H1 (cell line): ENCODE measurements at regions of chr17 and their contacts with region 1.

Region 1: DNA sequence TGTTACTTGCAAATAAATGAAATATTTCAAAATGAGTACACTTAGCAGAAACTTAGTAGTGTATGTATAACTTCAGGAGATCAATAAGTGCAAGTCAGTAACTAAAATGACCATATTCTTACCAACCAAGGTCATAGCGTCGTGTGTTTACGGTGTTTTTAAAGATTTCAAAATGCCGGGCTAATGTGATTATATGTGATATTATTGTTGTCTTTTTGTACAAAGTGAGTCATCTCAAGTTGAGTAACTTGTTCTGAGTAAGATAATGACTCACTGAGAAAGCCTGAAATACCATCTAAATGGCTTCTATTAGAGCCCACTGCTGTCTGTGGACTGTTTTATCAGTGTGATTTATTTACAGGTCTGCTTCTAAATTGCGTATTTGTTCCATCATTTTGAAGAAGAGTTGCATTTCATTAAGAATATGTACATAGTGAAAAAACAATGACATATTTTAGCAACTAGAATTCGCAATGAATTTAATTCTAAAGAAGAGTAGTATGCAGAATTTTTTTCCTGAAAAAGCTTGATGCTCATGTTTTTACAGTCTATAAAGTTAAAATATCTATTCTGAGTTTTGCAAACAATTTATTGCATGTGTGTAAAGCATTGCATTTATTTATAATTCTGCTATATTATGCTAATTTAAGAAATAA is 12.7 kb downstream of the KRT12 start:
- DNase-seq: no peak
- H3K4me3 ChIP-seq: no peak overlapping the region
- H3K27ac ChIP-seq: no peak overlapping the region
- H3K4me1 ChIP-seq: peaks cover 0 to 8% (median 2%) of the 10 kb centered on the region in 4 experiments; a peak in 3 of 7 replicates
- H3K27me3 ChIP-seq: no peaks in the 10 kb centered on the region; a peak in 1 of 7 replicates
- CTCF ChIP-seq: no peak
- EP300 ChIP-seq: no peak
- POLR2A ChIP-seq: no peak
- RAD21 ChIP-seq: no peak

Region 2: DNA sequence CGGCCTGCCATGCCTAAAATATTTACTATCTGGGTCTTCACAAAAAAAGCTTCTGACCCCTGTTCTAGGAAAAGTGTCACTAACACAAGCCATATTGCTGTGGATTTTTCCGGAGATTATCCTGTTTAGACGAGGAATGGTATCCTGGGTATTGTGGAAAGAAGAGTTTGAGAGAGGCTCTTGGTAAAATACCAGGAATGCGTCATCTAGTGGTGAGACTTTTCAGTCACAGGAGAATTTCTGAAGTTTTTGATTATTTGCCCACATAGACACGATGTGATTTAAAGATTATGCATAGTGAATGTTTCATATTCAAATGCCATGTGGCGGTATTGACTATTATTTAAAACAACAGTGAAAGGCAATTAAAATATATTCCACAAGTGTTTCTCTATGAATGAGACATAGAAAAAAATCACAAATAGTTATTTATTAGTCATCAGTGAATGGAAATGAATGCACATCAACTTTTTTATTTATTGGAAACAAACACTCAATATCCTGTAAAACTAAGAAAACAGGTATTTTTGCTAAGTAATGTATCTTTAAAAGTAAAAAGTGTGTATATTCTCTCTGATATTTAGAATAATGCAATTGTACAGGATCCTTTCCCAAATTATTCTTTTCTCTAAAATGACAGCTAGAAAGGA is 62.4 kb before region 1 on chr17:
- CTCF ChIA-PET with region 1: interaction called, 10 read pairs
- POLR2A ChIA-PET with region 1: no interaction called
- DNase-seq: no peak
- H3K4me3 ChIP-seq: no peak overlapping the region
- H3K27ac ChIP-seq: no peak overlapping the region
- H3K4me1 ChIP-seq: no peaks in the 10 kb centered on the region
- H3K27me3 ChIP-seq: no peaks in the 10 kb centered on the region
- CTCF ChIP-seq: peak in 2 of 3 experiments; percentile 57 to 61; a peak in 3 of 4 replicates
- EP300 ChIP-seq: no peak
- POLR2A ChIP-seq: no peak
- RAD21 ChIP-seq: peak; percentile 66

Region 3: DNA sequence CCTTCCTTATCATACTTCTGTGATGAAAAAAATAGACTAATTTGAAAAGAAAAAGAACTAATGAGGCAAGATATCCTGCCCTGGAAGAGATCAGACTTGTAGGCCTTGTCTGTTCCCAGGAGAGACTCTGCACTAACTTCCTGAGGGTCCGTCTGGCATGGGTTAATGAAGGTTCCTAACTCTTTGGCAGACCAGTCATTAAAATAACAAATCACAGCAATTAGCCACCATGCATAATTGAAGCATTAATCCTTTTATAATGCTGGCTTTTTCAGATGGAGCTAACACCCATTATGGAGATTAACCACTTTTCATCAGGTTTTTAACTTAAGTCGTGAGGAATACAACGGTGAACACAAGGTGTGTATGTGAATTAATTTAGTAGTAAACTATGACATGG is 21.4 kb before region 1 on chr17:
- CTCF ChIA-PET with region 1: no interaction called
- POLR2A ChIA-PET with region 1: no interaction called
- DNase-seq: no peak
- H3K4me3 ChIP-seq: no peak overlapping the region
- H3K27ac ChIP-seq: no peak overlapping the region
- H3K4me1 ChIP-seq: peaks cover 0 to 3% (median 0%) of the 10 kb centered on the region in 4 experiments; a peak in 1 of 7 replicates
- H3K27me3 ChIP-seq: peaks cover 3 to 27% (median 9%) of the 10 kb centered on the region in 4 experiments
- CTCF ChIP-seq: no peak
- EP300 ChIP-seq: no peak
- POLR2A ChIP-seq: no peak
- RAD21 ChIP-seq: no peak

Region 4: DNA sequence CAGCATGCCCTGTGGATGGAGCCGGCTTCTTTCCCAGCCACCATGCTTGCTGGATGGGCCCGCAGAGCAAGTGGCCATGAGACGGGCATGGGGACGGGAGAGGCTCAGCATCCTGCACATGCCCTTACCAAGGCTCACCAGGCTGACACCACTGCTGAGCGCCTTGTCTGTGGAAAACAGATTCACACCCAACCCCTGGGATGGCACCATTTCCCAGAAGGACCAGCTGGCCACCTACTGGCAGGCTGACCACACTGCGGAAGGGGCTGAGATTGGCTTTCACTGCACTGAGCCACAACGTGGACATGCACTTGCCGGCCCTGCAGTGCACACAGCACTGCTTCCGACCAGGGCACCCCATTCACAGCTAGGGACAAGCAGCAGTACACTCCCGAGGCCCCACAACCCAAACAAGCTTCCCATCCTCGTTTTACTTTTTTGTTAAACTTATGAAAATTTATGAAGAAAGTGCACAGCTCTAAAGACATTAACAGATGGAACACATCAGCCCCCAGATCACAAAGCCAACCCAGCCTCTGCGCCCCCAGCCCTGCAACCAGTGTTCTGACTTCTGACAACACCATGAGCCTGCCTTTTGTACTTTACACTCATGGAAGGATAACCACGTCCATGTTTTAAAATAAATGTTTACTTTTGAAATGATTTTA is 475.1 kb after region 1 on chr17:
- CTCF ChIA-PET with region 1: interaction called, 16 read pairs
- POLR2A ChIA-PET with region 1: interaction called, 3 read pairs
- DNase-seq: peak; percentile 27 to 78
- H3K4me3 ChIP-seq: no peak overlapping the region
- H3K27ac ChIP-seq: no peak overlapping the region
- H3K4me1 ChIP-seq: no peaks in the 10 kb centered on the region; a peak in 1 of 7 replicates
- H3K27me3 ChIP-seq: no peaks in the 10 kb centered on the region
- CTCF ChIP-seq: peak; percentile 86 to 97 (median 95)
- EP300 ChIP-seq: no peak
- POLR2A ChIP-seq: no peak
- RAD21 ChIP-seq: peak; percentile 83 to 88